ENCODE measurements at regions of chr12 and their contacts with region 1.

Region 1: DNA sequence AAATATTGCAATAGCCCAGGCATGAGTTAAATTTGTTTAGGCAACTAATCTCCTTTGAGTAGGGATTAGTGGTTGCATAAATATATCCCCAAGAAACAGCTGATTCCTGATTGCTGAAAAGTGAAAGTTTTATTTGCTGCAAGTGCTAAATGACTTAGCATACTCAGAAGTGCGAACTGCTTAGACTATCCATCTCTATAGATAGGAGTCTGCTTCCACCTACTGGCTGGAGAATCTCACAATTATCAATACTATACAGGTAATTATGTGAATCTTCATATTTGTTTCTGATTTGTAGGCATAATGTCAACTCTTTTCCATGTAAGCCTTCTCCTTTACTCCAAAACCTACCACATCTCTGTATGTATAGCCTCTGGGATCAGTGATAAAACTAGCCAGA is 11.9 kb upstream of the SLCO1B3 start:
- DNase-seq: no peak
- H3K4me3 ChIP-seq: no peak overlapping the region
- H3K27ac ChIP-seq: no peak overlapping the region
- H3K4me1 ChIP-seq: no peaks in the 10 kb centered on the region
- H3K27me3 ChIP-seq: no peaks in the 10 kb centered on the region
- CTCF ChIP-seq: peak in 2 of 3 experiments; percentile 37 to 54; a peak in 2 of 4 replicates
- EP300 ChIP-seq: no peak
- POLR2A ChIP-seq: no peak
- RAD21 ChIP-seq: peak; percentile 75 to 82

Region 2: GRCh38 chr12:20681334-20681733 is 117.2 kb before region 1 on chr12:
- CTCF ChIA-PET with region 1: interaction called, 12 read pairs
- POLR2A ChIA-PET with region 1: no interaction called
- DNase-seq: no peak
- H3K4me3 ChIP-seq: no peak overlapping the region
- H3K27ac ChIP-seq: no peak overlapping the region
- H3K4me1 ChIP-seq: no peaks in the 10 kb centered on the region
- H3K27me3 ChIP-seq: no peaks in the 10 kb centered on the region
- CTCF ChIP-seq: no peak
- EP300 ChIP-seq: no peak
- POLR2A ChIP-seq: no peak
- RAD21 ChIP-seq: no peak